ENCODE measurements at regions of chr3 and their contacts with region 1.

Region 1: GRCh38 chr3:138180375-138181029 is 5.8 kb upstream of the DBR1 start:
- DNase-seq: peak; percentile 61
- ATAC-seq: peak; percentile 95
- H3K4me3 Mint-ChIP-seq: no peak overlapping the region
- H3K27ac Mint-ChIP-seq: no peak overlapping the region
- H3K4me1 Mint-ChIP-seq: no peaks in the 10 kb centered on the region
- H3K27me3 Mint-ChIP-seq: peaks cover 3% of the 10 kb centered on the region

Region 2: DNA sequence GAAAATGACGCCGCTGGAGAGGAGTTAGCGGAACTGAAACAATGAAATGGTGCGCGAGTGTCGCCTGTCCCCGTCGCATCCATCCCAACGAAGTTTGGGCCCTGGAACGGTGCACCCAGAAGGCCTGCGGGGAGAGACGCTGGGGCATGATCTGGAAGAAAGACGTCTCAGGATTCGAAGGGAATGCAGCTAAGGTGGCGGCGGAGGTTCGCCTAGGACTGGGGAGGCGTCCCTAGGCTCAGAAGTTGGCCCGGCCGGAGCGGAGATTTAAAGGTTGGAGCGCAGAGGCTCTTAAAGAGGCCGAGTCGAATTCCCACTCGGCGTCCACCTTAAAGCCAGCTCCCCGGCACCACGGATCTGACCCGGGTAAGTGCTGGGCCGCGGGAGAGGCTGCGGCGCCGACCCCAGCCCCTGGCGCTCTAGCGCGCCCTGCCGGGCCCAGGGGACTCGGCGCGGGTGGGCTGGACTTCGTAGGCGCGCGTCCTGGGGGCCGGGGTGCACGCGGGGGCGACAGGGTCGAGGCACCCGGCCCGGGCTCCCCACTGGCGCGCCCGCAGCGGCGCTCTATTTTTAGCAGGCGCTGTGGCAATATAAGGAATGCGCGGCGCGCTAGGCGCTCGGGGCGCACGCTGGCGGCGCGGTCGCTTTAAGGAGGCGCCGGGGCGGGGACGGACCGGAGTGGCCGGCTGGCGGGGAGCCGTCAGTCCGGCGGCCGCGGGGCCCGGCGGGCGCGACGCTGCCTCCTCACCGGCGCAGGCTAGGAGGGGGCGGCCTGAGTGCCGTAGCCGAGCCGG is 167.7 kb after region 1 on chr3 and contains the start of gene MRAS:
- CTCF ChIA-PET with region 1: no interaction called
- POLR2A ChIA-PET with region 1: no interaction called
- intact Hi-C with region 1: loop called (anchors 1 to 2 kb)
- DNase-seq: peak; percentile 59
- ATAC-seq: peak; percentile 81
- H3K4me3 Mint-ChIP-seq: peak within 1 kb of the TSS; percentile 84
- H3K27ac Mint-ChIP-seq: no peak within 1 kb of the TSS
- H3K4me1 Mint-ChIP-seq: peaks cover 6% of the 10 kb centered on the region
- H3K27me3 Mint-ChIP-seq: peaks cover 32% of the 10 kb centered on the region
- total RNA-seq, gene MRAS: 0.16 TPM

Measured in activated CD4-positive, alpha-beta T cell treated with anti-CD3 and anti-CD28 coated beads for 36 hours (primary cell).